Sigmoid colon (tissue), 7 donors: ENCODE measurements at regions of chr18 and their contacts with region 1.

Region 1: DNA sequence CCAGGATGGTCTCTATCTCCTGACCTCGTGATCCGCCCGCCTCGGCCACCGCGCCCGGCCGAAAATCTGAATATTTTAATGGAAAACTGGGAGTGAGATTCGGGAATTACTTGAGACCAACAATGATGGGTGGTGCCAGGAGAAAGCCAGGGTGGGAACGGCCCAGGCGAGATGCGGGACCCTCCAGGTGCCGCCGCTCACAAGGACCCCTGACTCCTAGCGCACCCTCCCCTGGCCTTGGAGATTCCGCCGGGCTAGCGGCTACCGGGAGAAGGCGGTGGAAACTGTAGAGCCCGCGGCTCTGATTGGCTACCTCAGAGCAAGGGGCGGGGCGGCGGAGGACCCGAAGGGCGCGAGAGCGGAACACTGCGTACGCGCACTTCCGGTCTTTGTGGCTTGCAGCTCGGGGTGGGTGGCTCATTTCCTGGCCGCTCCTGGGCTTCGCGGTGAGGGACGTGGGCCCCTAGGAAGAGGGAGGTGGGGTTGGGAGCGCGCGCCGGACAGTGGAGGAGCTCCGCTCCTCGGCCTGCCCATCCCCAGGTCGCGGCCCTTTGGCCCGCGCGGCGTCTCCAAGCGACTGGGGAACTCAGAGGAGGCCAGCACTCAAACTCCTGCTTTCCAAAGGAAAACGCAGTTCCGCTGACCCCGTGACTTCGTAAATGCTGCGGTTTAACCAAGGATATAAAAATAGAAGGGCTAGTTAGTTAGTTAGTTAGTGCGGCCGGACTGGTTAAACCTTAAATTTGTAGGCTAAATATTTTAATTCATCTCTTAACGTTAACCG is at the start of gene ZNF397:
- DNase-seq: peak; percentile 99
- H3K4me3 ChIP-seq: peak within 1 kb of the TSS; percentile 67 to 85 (median 78)
- H3K27ac ChIP-seq: peak within 1 kb of the TSS; percentile 96 to 98 (median 98)
- H3K4me1 ChIP-seq: peaks cover 0 to 15% (median 13%) of the 10 kb centered on the region in 4 donors
- H3K27me3 ChIP-seq: no peaks in the 10 kb centered on the region
- CTCF ChIP-seq: no peak
- EP300 ChIP-seq: no peak
- POLR2A ChIP-seq: peak; percentile 93 to 95
- total RNA-seq, gene ZNF397: 25.5 to 33.2 (median 31.5) TPM

Region 2: DNA sequence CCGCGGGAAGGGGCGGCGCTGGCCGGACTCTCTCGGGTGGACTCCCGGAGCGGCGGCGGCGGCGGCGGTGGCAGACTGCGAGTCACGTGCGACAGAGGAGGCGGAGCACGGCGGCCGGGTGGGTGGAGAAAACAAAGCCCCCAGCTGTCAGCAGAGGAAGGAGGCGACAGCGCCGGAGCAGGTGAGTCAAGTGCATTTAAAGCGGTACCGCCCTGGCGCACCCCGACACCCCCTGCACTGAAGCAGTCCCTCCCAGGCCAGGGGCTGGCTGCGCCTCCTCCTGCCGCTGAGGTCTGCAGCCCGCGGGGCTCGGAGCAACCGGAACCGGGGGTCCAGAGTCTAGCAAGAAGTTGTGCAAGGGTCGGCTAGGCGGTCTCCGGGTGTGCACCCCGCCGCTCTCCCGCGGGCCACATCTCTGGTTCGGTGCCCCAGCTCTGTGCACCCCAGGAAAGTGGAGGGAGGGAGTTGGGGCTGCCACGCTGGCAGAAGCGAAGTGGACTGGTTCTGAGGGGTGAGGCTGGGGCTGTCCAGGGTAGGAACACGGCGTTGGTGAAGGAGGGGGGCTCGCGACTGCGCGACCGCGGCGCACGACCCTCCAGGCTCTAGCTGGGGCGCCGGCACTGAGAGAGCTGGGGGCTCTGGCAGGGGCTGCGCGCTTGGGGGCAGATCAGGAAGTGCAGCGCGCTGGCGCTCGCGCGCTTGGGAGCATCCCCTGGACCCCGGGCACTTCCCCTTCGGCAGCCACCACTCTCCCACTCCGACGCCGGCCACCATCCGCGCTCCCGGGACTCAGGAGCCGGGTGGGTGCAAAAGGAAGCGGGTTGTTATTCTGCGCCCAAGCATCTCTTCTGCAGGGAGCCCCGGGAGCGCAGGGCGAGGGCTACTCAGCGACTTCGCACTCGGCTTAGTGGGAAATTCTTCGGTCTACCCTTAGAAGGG is 263.7 kb before region 1 on chr18:
- intact Hi-C with region 1: no loop called
- DNase-seq: peak; percentile 86
- H3K4me3 ChIP-seq: peak overlapping the region; percentile 55 to 83 (median 71)
- H3K27ac ChIP-seq: peak overlapping the region; percentile 16 to 79 (median 74)
- H3K4me1 ChIP-seq: peaks cover 0 to 23% (median 15%) of the 10 kb centered on the region in 4 donors
- H3K27me3 ChIP-seq: no peaks in the 10 kb centered on the region
- CTCF ChIP-seq: no peak
- EP300 ChIP-seq: no peak
- POLR2A ChIP-seq: peak in 1 of 2 donors; percentile 23

Region 3: DNA sequence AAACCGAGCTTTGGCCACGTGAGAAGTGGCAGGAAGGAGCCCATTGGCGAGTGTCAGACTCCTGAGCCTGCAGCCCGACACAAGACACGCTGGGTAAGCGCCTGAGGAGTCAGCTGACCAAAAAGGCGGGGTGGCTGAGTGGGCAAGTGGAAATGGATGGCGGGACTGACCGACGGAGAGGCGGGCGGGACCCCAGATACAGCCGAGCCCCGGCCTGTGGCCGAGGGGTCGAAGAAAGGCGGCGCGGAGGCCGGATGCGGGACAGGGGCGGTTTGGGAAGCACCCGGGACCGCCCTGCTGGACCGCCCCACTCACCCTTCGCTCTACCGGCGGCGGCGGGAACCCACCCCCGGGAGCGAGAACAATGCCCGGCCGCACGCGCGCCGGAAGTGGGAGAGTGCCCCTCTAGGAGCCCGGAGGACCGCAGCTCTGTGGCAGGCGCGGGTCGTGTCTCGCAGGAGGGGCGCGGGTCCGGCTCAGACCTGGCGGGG is 26.4 kb after region 1 on chr18:
- intact Hi-C with region 1: loop called (anchors 2 kb)
- DNase-seq: peak; percentile 93
- H3K4me3 ChIP-seq: peak overlapping the region; percentile 66 to 75 (median 72)
- H3K27ac ChIP-seq: peak overlapping the region; percentile 85 to 89 (median 87)
- H3K4me1 ChIP-seq: peaks cover 0 to 6% (median 5%) of the 10 kb centered on the region in 4 donors
- H3K27me3 ChIP-seq: no peaks in the 10 kb centered on the region
- CTCF ChIP-seq: no peak
- EP300 ChIP-seq: peak in 1 of 4 donors; percentile 6
- POLR2A ChIP-seq: peak; percentile 8 to 16